ENCODE measurements at regions of chr7 and their contacts with region 1.

Region 1: GRCh38 chr7:77651573-77652162 is 44.6 kb upstream of the RSBN1L start:
- DNase-seq: no peak
- ATAC-seq: no peak
- H3K4me3 Mint-ChIP-seq: no peak overlapping the region
- H3K27ac Mint-ChIP-seq: no peak overlapping the region
- H3K4me1 Mint-ChIP-seq: no peaks in the 10 kb centered on the region
- H3K27me3 Mint-ChIP-seq: no peaks in the 10 kb centered on the region
- CTCF ChIP-seq: no peak

Region 2: DNA sequence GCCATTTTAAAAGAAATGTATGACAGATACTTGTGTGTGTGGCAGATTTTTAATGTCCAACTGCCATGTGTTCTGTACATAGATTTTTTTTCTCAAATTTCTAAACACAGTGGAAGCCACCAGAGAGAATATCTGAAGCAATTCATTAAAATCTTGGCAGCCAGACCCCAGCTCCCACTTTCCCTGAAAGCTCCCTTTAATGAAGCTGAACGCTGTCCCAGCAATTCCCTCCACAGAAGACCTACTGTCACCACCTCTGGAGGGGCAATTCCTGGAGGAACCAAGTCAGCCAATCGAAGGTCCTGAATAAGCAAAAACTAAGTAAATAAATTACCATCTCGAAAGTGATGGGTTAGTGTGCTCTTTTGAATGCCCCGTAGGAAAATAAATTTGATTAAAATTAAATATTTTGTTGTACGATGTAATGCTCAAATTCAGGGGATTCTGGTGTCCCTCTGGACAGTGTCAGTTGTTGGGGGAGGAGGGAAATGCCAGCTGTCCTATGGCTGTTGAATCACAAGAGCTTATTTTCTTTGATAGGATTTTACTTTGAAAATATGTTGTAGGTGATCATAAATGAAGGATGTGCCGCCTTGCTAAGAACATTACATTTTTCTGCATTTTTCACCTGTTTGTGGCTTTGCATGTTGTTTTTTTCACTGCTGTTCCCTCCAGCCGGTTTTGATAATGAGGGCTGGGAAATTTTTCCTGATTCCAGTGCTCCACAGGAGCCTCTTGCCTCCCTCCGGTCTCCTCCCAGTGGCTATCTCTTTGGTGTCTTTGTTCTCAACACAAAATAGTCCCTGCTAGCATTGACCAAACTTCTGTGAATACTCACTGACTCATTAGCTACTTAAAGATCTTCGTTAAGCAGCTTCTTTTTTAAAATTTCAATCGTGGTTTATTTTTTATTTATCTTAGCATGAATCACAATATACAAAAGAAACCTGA is 226.3 kb before region 1 on chr7:
- CTCF ChIA-PET with region 1: no interaction called
- POLR2A ChIA-PET with region 1: no interaction called
- intact Hi-C with region 1: loop called (anchors 5 kb)
- DNase-seq: no peak
- ATAC-seq: no peak
- H3K4me3 Mint-ChIP-seq: peak overlapping the region; percentile 59
- H3K27ac Mint-ChIP-seq: peak overlapping the region; percentile 46
- H3K4me1 Mint-ChIP-seq: peaks cover 39% of the 10 kb centered on the region
- H3K27me3 Mint-ChIP-seq: no peaks in the 10 kb centered on the region
- CTCF ChIP-seq: no peak

Region 3: GRCh38 chr7:77696198-77697028 is 44.7 kb after region 1 on chr7 and contains the start of gene RSBN1L:
- CTCF ChIA-PET with region 1: interaction called, 12 read pairs
- POLR2A ChIA-PET with region 1: no interaction called
- intact Hi-C with region 1: no loop called
- DNase-seq: peak; percentile 96
- ATAC-seq: peak; percentile 94
- H3K4me3 Mint-ChIP-seq: peak within 1 kb of the TSS; percentile 96
- H3K27ac Mint-ChIP-seq: peak within 1 kb of the TSS; percentile 93
- H3K4me1 Mint-ChIP-seq: peaks cover 54% of the 10 kb centered on the region
- H3K27me3 Mint-ChIP-seq: no peaks in the 10 kb centered on the region
- CTCF ChIP-seq: no peak
- total RNA-seq, gene RSBN1L: 24.5 and 25.9 TPM in 2 replicates

Region 4: DNA sequence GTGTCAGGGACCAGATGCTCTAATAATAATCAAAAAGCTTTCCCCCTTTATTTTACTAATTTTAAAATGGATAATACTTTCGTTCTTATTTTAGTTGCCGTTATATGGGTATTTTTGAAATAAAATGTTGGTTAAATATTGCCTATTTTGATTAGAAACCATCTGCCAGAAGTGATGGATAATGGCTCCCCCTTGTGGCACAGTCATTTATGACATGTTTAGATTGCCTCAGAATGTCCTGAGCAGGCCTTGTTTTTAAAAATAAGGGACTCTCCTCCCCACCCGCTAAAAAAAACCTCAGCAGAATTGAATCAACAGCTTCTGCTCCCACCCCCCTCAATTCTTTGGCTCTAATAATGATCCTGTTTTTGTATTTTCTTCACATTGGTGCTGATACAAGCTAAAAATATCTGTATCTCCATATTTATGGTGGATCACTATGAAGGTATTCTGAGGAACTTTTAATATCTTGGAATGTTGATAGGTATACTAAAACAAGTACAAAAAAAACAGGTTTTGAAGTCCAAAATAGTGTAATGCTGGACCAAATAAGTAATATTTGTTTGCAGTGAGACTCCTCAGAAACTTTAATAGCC is 107.7 kb after region 1 on chr7:
- CTCF ChIA-PET with region 1: interaction called, 67 read pairs
- POLR2A ChIA-PET with region 1: interaction called, 3 read pairs
- intact Hi-C with region 1: loop called (anchors 1 kb)
- DNase-seq: no peak
- ATAC-seq: peak; percentile 64
- H3K4me3 Mint-ChIP-seq: no peak overlapping the region
- H3K27ac Mint-ChIP-seq: peak overlapping the region; percentile 50
- H3K4me1 Mint-ChIP-seq: peaks cover 52% of the 10 kb centered on the region
- H3K27me3 Mint-ChIP-seq: no peaks in the 10 kb centered on the region
- CTCF ChIP-seq: peak; percentile 22

Region 5: GRCh38 chr7:77940647-77941046 is 289.0 kb after region 1 on chr7:
- CTCF ChIA-PET with region 1: interaction called, 11 read pairs
- POLR2A ChIA-PET with region 1: no interaction called
- intact Hi-C with region 1: loop called (anchors 2 kb)
- DNase-seq: no peak
- ATAC-seq: peak; percentile 25
- H3K4me3 Mint-ChIP-seq: no peak overlapping the region
- H3K27ac Mint-ChIP-seq: no peak overlapping the region
- H3K4me1 Mint-ChIP-seq: peaks cover 7% of the 10 kb centered on the region
- H3K27me3 Mint-ChIP-seq: no peaks in the 10 kb centered on the region
- CTCF ChIP-seq: no peak

Region 6: GRCh38 chr7:78039790-78040776 is 388.4 kb after region 1 on chr7:
- CTCF ChIA-PET with region 1: interaction called, 22 read pairs
- POLR2A ChIA-PET with region 1: no interaction called
- intact Hi-C with region 1: loop called (anchors 2 kb)
- DNase-seq: peak; percentile 55
- ATAC-seq: peak; percentile 79
- H3K4me3 Mint-ChIP-seq: no peak overlapping the region
- H3K27ac Mint-ChIP-seq: no peak overlapping the region
- H3K4me1 Mint-ChIP-seq: peaks cover 2% of the 10 kb centered on the region
- H3K27me3 Mint-ChIP-seq: peaks cover 20% of the 10 kb centered on the region
- CTCF ChIP-seq: peak; percentile 18

Region 7: GRCh38 chr7:79420464-79420863 is 1768.8 kb after region 1 on chr7:
- CTCF ChIA-PET with region 1: no interaction called
- POLR2A ChIA-PET with region 1: no interaction called
- intact Hi-C with region 1: no loop called
- DNase-seq: no peak
- ATAC-seq: no peak
- H3K4me3 Mint-ChIP-seq: no peak overlapping the region
- H3K27ac Mint-ChIP-seq: no peak overlapping the region
- H3K4me1 Mint-ChIP-seq: no peaks in the 10 kb centered on the region
- H3K27me3 Mint-ChIP-seq: no peaks in the 10 kb centered on the region
- CTCF ChIP-seq: no peak